GM23248 (cell line): ENCODE measurements at regions of chr20 and their contacts with region 1.

Region 1: GRCh38 chr20:25360635-25361286 is 29.9 kb downstream of the ABHD12 start:
- DNase-seq: peak; percentile 25
- H3K4me3 ChIP-seq: no peak overlapping the region
- H3K27ac ChIP-seq: no peak overlapping the region
- H3K4me1 ChIP-seq: 0 out of 2 replicates have a peak, but pooled peaks cover 4% of the 10 kb centered on the region
- H3K27me3 ChIP-seq: no peaks in the 10 kb centered on the region

Region 2: DNA sequence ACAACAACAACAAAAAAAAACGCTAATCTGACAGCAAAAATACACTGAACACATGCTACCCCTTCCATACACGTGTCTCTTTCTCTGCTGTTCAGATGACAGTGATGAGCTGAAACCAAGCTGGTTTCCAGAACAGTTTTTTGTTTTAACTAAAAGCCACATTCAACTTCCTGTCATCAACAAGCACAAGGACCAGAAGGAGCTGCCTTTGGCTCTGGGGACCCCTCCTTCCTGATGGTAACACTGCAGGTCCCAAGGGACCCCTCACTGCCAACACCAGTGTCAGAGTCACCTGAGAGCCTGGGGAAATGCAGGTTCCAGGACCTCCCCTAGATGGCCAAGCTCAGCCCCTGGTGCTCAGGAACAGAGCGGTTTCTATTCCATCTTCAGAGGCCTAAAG is 405.7 kb before region 1 on chr20:
- in situ Hi-C with region 1: no loop called
- DNase-seq: no peak
- H3K4me3 ChIP-seq: no peak overlapping the region
- H3K27ac ChIP-seq: no peak overlapping the region
- H3K4me1 ChIP-seq: no peaks in the 10 kb centered on the region
- H3K27me3 ChIP-seq: no peaks in the 10 kb centered on the region

Region 3: GRCh38 chr20:25421102-25421501 is 60.3 kb after region 1 on chr20:
- in situ Hi-C with region 1: loop called (anchors 10 kb)
- DNase-seq: peak; percentile 8
- H3K4me3 ChIP-seq: no peak overlapping the region
- H3K27ac ChIP-seq: no peak overlapping the region
- H3K4me1 ChIP-seq: peaks cover 9% of the 10 kb centered on the region; the same call in 1 of the 2 replicates
- H3K27me3 ChIP-seq: no peaks in the 10 kb centered on the region

Region 4: DNA sequence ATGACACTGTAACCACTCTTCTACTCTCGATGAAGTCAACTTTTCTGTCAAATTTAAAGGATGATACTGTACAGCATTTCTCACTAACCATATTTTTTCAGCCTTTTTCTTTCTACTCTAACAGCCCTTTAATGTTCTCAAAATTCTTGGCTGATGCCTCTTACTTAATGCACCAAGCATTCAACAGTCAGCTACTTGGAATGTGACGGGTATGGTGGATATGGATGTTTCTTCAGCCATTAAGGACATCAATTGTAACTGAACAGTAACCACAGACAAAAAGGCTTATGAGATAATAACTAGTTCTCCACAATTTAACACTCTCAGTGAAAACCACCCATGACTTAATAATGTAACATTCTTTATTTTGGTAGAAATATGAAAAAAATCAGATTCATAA is 803.1 kb after region 1 on chr20:
- in situ Hi-C with region 1: loop called (anchors 25 kb)
- DNase-seq: peak; percentile 86
- H3K4me3 ChIP-seq: no peak overlapping the region
- H3K27ac ChIP-seq: peak overlapping the region; percentile 42
- H3K4me1 ChIP-seq: peaks cover 62% of the 10 kb centered on the region
- H3K27me3 ChIP-seq: no peaks in the 10 kb centered on the region